ENCODE measurements at regions of chr9 and their contacts with region 1.

Region 1: GRCh38 chr9:4832786-4833579 is 40.2 kb downstream of the RCL1 start:
- DNase-seq: peak; percentile 80
- H3K4me3 Mint-ChIP-seq: no peak overlapping the region
- H3K27ac Mint-ChIP-seq: peak overlapping the region; percentile 91
- H3K4me1 Mint-ChIP-seq: peaks cover 47% of the 10 kb centered on the region
- H3K27me3 Mint-ChIP-seq: no peaks in the 10 kb centered on the region

Region 2: GRCh38 chr9:4662108-4662988 is 170.6 kb before region 1 on chr9 and contains the start of gene PLPP6:
- CTCF ChIA-PET with region 1: no interaction called
- POLR2A ChIA-PET with region 1: no interaction called
- intact Hi-C with region 1: loop called (anchors 10 kb)
- DNase-seq: peak; percentile 88
- H3K4me3 Mint-ChIP-seq: peak within 1 kb of the TSS; percentile 91
- H3K27ac Mint-ChIP-seq: peak within 1 kb of the TSS; percentile 80
- H3K4me1 Mint-ChIP-seq: peaks cover 55% of the 10 kb centered on the region
- H3K27me3 Mint-ChIP-seq: no peaks in the 10 kb centered on the region
- total RNA-seq, gene PLPP6: 4.4 to 4.6 TPM

Region 3: GRCh38 chr9:4750023-4750673 is 82.8 kb before region 1 on chr9:
- CTCF ChIA-PET with region 1: no interaction called
- POLR2A ChIA-PET with region 1: no interaction called
- intact Hi-C with region 1: loop called (anchors 2 kb)
- DNase-seq: no peak
- H3K4me3 Mint-ChIP-seq: no peak overlapping the region
- H3K27ac Mint-ChIP-seq: no peak overlapping the region
- H3K4me1 Mint-ChIP-seq: peaks cover 20% of the 10 kb centered on the region
- H3K27me3 Mint-ChIP-seq: no peaks in the 10 kb centered on the region

Region 4: DNA sequence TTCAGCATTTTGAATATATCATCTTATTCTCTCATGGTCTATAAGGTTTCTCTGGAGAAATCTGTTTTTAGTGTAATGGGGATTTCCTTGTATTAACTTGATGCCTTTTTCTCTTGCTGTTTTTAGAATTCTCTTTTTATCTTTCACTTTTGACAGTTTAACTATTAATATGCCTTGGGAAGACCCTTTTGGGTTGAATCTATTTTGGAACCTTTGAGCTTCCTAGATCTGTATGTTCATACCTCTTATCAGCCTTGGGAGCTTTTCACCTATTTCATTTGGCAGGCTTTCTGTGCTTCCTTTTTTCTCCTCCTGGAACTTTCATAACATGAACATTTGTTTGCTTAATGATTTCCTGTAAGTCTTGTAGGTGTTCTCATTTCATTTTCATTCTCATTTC is 18.1 kb before region 1 on chr9:
- CTCF ChIA-PET with region 1: no interaction called
- POLR2A ChIA-PET with region 1: interaction called, 3 read pairs
- intact Hi-C with region 1: loop called (anchors 2 kb)
- DNase-seq: no peak
- H3K4me3 Mint-ChIP-seq: peak overlapping the region; percentile 8
- H3K27ac Mint-ChIP-seq: peak overlapping the region; percentile 85
- H3K4me1 Mint-ChIP-seq: peaks cover 46% of the 10 kb centered on the region
- H3K27me3 Mint-ChIP-seq: no peaks in the 10 kb centered on the region

Region 5: DNA sequence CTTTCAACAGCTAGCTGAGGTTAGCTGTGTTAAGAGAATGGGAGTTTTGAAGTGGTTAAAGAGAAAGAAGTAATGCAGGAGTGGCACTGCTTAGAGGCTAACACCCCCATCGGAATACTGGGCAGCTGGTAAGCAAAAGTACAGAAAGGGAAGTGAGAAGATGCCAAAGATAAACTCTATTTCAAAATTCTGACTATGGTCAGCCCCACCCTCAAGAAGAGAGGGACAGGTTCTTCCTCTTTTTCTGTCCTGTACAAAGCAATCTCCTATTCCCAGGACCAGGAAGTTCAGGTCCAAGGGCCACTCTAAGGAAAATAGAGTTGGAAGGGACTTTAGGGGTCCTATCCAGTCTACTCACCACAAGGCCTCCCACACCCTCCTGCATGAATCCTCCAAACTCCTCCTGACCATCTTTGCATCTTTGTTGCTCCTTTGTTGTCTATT is 106.2 kb after region 1 on chr9:
- CTCF ChIA-PET with region 1: no interaction called
- POLR2A ChIA-PET with region 1: interaction called, 5 read pairs
- intact Hi-C with region 1: loop called (anchors 1 kb)
- DNase-seq: peak; percentile 25
- H3K4me3 Mint-ChIP-seq: no peak overlapping the region
- H3K27ac Mint-ChIP-seq: peak overlapping the region; percentile 91
- H3K4me1 Mint-ChIP-seq: peaks cover 74% of the 10 kb centered on the region
- H3K27me3 Mint-ChIP-seq: no peaks in the 10 kb centered on the region

Region 6: DNA sequence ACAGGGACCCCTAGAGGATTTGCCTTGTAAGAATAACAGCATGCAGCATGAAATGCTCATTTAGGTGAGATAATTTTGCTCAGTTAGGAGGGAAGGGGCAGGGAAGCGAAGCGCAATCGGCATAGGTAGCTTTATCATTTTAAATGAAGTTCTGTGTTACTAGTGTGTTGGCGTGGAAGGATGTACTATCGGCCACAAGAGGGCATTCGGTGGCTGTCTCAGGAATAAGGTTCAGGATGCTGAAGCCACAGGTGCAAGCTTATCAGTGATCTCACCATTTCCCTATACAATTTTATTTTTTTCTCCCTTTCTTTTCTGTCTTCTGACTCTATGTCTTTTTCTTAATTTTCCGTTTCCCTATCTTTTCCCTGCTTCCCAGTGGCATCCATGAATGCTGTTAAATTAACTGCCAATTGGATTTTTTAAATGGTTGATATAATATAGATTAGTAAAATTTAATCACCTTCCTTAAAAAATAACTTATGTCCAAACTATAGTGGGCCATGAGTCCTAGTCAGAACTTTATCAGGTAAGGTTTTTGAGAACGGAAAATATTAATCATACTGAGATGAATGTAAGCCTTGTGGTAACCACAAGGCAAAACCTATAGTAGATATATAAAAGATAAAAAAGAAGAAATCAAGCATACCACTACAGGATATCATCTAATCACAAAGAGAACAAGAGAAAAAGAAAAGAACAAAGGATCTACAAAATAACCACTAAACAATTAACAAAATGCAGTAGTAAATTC is 353.6 kb after region 1 on chr9:
- CTCF ChIA-PET with region 1: no interaction called
- POLR2A ChIA-PET with region 1: no interaction called
- intact Hi-C with region 1: loop called (anchors 5 kb)
- DNase-seq: peak; percentile 74
- H3K4me3 Mint-ChIP-seq: no peak overlapping the region
- H3K27ac Mint-ChIP-seq: no peak overlapping the region
- H3K4me1 Mint-ChIP-seq: peaks cover 15% of the 10 kb centered on the region
- H3K27me3 Mint-ChIP-seq: no peaks in the 10 kb centered on the region